AG04449 (cell line): ENCODE measurements at regions of chr4 and their contacts with region 1.

Region 1: DNA sequence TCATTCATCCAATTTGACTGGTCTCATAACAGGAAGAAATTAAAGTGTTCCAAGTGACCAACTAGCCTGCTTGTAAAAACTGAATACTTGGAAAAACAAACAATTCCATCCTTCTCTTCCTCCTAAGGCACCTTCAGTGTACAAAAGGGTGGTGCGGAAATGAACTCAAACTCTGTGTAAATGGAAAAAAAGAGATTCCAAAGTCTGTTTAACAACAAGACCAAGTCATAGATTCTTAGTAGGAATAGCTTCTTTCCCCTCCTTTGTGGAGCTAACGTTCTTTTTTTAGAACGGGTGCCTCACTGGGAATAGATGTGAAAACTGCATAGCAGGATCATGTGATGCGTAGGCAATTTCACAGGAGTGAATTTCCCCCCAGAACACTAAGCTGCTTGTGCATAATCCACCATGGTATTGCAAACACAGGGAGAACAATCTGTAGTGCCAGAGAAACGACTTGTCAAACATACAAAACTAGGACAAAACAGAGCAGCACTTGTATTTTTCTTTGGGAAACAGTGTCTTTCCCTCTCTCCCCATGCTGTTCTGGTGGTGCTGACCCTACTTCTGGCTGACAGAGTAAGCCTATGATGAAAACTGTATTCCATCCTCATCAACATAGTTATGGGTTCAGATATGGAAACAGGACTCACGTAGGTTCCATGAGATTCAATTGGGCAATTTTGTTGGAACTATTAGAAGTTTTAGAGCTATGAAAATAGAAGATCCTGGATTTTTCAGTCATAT is 13.2 kb upstream of the SOD3 start:
- DNase-seq: no peak
- H3K4me3 ChIP-seq: no peak overlapping the region
- CTCF ChIP-seq: no peak

Region 2: GRCh38 chr4:24793219-24794005 is 11.2 kb after region 1 on chr4:
- CTCF ChIA-PET with region 1: interaction called, 14 read pairs
- POLR2A ChIA-PET with region 1: no interaction called
- DNase-seq: no peak
- H3K4me3 ChIP-seq: no peak overlapping the region
- CTCF ChIP-seq: peak; percentile 16